T-cell (primary cell): ENCODE measurements at regions of chr11 and their contacts with region 1.

Region 1: GRCh38 chr11:73787643-73788537 is at the start of gene MRPL48:
- DNase-seq: peak; percentile 74 to 90 (median 85)
- ATAC-seq: peak; percentile 100
- H3K4me3 ChIP-seq: peak within 1 kb of the TSS; percentile 80 to 83
- H3K4me3 Mint-ChIP-seq: peak within 1 kb of the TSS; percentile 91 to 99 (median 99)
- H3K27ac ChIP-seq: peak within 1 kb of the TSS; percentile 73
- H3K27ac Mint-ChIP-seq: peak within 1 kb of the TSS; percentile 100
- H3K4me1 ChIP-seq: peaks cover 9 to 15% of the 10 kb centered on the region in 2 experiments
- H3K4me1 Mint-ChIP-seq: peaks cover 23 to 27% (median 24%) of the 10 kb centered on the region in 3 donors
- H3K27me3 ChIP-seq: no peaks in the 10 kb centered on the region
- H3K27me3 Mint-ChIP-seq: no peaks in the 10 kb centered on the region
- total RNA-seq, gene MRPL48: 21.9 to 26.6 (median 25.7) TPM

Region 2: DNA sequence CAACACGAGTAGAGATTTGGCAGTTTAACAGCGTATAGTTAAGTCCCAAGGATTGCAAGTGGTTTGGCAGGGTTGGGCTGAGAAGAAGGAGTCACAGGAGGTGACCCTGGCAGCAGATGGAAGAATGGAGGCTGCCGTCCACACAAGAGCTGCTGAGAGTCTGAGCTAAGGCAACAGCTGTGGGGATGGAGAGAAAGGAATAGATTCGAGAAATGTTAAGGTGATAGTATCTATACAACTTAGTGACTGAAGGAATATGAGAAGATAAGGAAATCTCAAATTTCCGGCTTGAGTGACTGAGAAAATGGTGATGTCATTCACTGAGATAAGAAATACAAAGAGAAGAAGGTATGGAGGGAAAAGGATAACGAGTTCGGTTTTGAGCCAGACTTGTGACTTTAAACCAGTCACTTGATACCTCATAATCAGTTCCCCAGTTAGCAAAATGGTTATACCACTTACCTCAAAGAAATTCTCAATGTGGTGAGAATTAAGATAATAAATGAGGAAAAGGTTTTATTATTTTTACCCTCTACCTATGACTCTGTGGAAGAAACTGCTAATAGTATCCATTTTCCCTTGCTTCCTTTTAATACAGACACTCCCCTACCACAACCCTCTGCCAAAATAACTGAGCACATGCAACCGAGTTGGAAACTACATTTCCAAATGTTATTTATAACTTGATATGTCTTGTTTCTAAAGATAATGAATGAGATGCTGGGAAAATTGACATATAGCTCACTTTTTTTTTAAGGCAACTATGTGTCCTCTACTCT is 220.7 kb before region 1 on chr11:
- CTCF ChIA-PET with region 1: no interaction called
- POLR2A ChIA-PET with region 1: interaction called in 1 of 2 experiments, 15 read pairs
- DNase-seq: no peak
- ATAC-seq: no peak
- H3K4me3 ChIP-seq: no peak overlapping the region
- H3K4me3 Mint-ChIP-seq: no peak overlapping the region
- H3K27ac ChIP-seq: no peak overlapping the region
- H3K27ac Mint-ChIP-seq: no peak overlapping the region
- H3K4me1 ChIP-seq: no peaks in the 10 kb centered on the region
- H3K4me1 Mint-ChIP-seq: peaks cover 2 to 14% (median 5%) of the 10 kb centered on the region in 3 donors
- H3K27me3 ChIP-seq: no peaks in the 10 kb centered on the region
- H3K27me3 Mint-ChIP-seq: no peaks in the 10 kb centered on the region

Region 3: DNA sequence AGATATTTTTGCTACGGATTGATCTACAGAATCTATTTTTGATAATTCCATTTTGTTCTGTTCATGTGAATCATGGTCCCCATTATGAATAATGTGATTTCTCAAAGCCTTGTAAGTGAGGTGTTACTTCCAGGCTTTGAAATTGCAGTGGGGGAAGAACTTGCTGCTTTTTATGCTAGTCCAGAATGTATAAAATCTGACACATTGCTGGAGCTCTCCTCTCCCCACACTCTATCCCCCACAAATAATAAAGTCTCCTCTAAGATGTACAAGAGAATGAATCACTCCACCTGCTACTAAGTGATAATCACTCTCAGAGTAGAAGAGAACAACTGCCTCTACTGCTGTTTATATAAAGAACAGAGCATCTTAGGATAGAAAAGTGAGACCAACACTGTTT is 21.1 kb before region 1 on chr11:
- CTCF ChIA-PET with region 1: interaction called in 1 of 2 experiments, 10 read pairs
- POLR2A ChIA-PET with region 1: interaction called in 1 of 2 experiments, 5 read pairs
- DNase-seq: no peak
- ATAC-seq: no peak
- H3K4me3 ChIP-seq: no peak overlapping the region
- H3K4me3 Mint-ChIP-seq: no peak overlapping the region
- H3K27ac ChIP-seq: no peak overlapping the region
- H3K27ac Mint-ChIP-seq: no peak overlapping the region
- H3K4me1 ChIP-seq: peaks cover 0 to under 1% of the 10 kb centered on the region in 2 experiments
- H3K4me1 Mint-ChIP-seq: no peaks in the 10 kb centered on the region
- H3K27me3 ChIP-seq: peaks cover 0 to 12% of the 10 kb centered on the region in 2 experiments
- H3K27me3 Mint-ChIP-seq: peaks cover 15 to 16% of the 10 kb centered on the region in 2 donors